Activated B cell treated with CpG ODN at 0.5 μM for 24 hours (primary cell): ENCODE measurements at regions of chr5 and their contacts with region 1.

Region 1: DNA sequence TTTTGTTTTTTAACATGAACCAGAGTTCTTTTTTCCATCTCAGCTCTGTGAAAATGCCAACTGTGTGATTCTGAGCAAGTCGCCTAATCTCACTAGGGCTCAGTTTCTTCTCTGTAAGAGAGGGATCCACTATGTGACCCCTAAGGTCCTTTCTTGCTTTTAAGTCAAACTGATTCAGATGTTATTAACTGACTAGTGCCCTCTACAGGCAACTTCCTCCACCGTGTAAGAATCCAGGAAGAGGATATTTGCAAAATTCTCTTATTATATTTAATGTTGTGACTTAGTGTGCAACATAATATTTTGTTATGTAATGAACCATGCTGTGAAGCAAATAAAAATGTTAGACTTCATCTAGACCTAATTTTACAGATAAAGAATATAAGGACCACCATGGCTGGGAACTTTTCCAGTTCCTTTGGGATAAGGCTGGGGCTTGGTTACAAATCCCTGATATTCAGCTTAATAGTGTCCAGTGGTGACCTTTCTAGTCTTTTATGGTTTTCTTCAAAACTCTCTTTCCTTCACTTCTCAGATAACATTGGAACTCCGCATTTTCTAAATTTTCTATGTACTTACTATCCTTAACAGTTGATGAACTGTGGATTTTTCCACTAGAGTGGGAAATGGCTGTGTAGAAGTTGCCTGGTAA is 244.7 kb downstream of the PIK3R1 start:
- DNase-seq: no peak
- ATAC-seq: peak; percentile 56
- H3K4me3 Mint-ChIP-seq: no peak overlapping the region
- H3K27ac Mint-ChIP-seq: no peak overlapping the region
- H3K4me1 Mint-ChIP-seq: no peaks in the 10 kb centered on the region
- H3K27me3 Mint-ChIP-seq: no peaks in the 10 kb centered on the region
- CTCF ChIP-seq: peak; percentile 54

Region 2: GRCh38 chr5:67246108-67246507 is 1214.2 kb before region 1 on chr5:
- CTCF ChIA-PET with region 1: interaction called, 3 read pairs
- POLR2A ChIA-PET with region 1: no interaction called
- intact Hi-C with region 1: loop called (anchors 1 kb)
- DNase-seq: no peak
- ATAC-seq: no peak
- H3K4me3 Mint-ChIP-seq: no peak overlapping the region
- H3K27ac Mint-ChIP-seq: no peak overlapping the region
- H3K4me1 Mint-ChIP-seq: peaks cover 2% of the 10 kb centered on the region
- H3K27me3 Mint-ChIP-seq: no peaks in the 10 kb centered on the region
- CTCF ChIP-seq: peak; percentile 53

Region 3: DNA sequence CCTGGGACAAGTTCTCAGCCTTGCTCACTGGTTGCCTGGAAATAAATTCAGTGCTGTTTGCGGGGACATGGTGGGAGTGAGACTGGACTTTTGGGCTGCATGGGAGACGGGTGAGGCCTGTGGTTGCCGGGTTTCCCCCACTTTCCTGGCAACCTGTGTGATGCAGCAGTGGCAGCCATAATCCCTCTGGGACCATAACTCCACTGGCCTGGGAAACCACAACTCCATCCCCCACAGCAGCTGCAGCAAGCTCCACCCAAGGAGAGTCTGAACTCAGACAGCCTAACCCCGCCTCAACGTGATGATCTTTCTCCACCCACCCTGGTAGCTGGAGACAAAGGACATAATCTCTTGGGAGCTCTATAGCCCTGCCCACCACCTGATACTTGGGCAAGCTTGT is 105.2 kb after region 1 on chr5:
- CTCF ChIA-PET with region 1: no interaction called
- POLR2A ChIA-PET with region 1: no interaction called
- intact Hi-C with region 1: loop called (anchors 1 kb)
- DNase-seq: peak; percentile 51
- ATAC-seq: peak; percentile 98
- H3K4me3 Mint-ChIP-seq: peak overlapping the region; percentile 45
- H3K27ac Mint-ChIP-seq: peak overlapping the region; percentile 71
- H3K4me1 Mint-ChIP-seq: peaks cover 22% of the 10 kb centered on the region
- H3K27me3 Mint-ChIP-seq: no peaks in the 10 kb centered on the region
- CTCF ChIP-seq: no peak

Region 4: GRCh38 chr5:68644971-68645370 is 184.7 kb after region 1 on chr5:
- CTCF ChIA-PET with region 1: no interaction called
- POLR2A ChIA-PET with region 1: no interaction called
- intact Hi-C with region 1: loop called (anchors 2 kb)
- DNase-seq: no peak
- ATAC-seq: peak; percentile 96
- H3K4me3 Mint-ChIP-seq: peak overlapping the region; percentile 24
- H3K27ac Mint-ChIP-seq: no peak overlapping the region
- H3K4me1 Mint-ChIP-seq: peaks cover 16% of the 10 kb centered on the region
- H3K27me3 Mint-ChIP-seq: no peaks in the 10 kb centered on the region
- CTCF ChIP-seq: no peak

Region 5: GRCh38 chr5:68661237-68661636 is 201.0 kb after region 1 on chr5:
- CTCF ChIA-PET with region 1: interaction called, 3 read pairs
- POLR2A ChIA-PET with region 1: no interaction called
- intact Hi-C with region 1: loop called (anchors 1 kb)
- DNase-seq: no peak
- ATAC-seq: peak; percentile 50
- H3K4me3 Mint-ChIP-seq: no peak overlapping the region
- H3K27ac Mint-ChIP-seq: no peak overlapping the region
- H3K4me1 Mint-ChIP-seq: no peaks in the 10 kb centered on the region
- H3K27me3 Mint-ChIP-seq: no peaks in the 10 kb centered on the region
- CTCF ChIP-seq: no peak

Region 6: GRCh38 chr5:68962757-68963484 is 502.6 kb after region 1 on chr5:
- CTCF ChIA-PET with region 1: no interaction called
- POLR2A ChIA-PET with region 1: no interaction called
- intact Hi-C with region 1: loop called (anchors 1 kb)
- DNase-seq: no peak
- ATAC-seq: no peak
- H3K4me3 Mint-ChIP-seq: no peak overlapping the region
- H3K27ac Mint-ChIP-seq: no peak overlapping the region
- H3K4me1 Mint-ChIP-seq: peaks cover 4% of the 10 kb centered on the region
- H3K27me3 Mint-ChIP-seq: no peaks in the 10 kb centered on the region
- CTCF ChIP-seq: no peak

Region 7: GRCh38 chr5:69007726-69008368 is 547.6 kb after region 1 on chr5:
- CTCF ChIA-PET with region 1: interaction called, 3 read pairs
- POLR2A ChIA-PET with region 1: no interaction called
- intact Hi-C with region 1: loop called (anchors 1 kb)
- DNase-seq: peak; percentile 52
- ATAC-seq: peak; percentile 77
- H3K4me3 Mint-ChIP-seq: no peak overlapping the region
- H3K27ac Mint-ChIP-seq: no peak overlapping the region
- H3K4me1 Mint-ChIP-seq: no peaks in the 10 kb centered on the region
- H3K27me3 Mint-ChIP-seq: peaks cover 37% of the 10 kb centered on the region
- CTCF ChIP-seq: peak; percentile 72